Right ventricle myocardium superior (tissue), 1 donor: ENCODE measurements at regions of chr1 and their contacts with region 1.

Region 1: DNA sequence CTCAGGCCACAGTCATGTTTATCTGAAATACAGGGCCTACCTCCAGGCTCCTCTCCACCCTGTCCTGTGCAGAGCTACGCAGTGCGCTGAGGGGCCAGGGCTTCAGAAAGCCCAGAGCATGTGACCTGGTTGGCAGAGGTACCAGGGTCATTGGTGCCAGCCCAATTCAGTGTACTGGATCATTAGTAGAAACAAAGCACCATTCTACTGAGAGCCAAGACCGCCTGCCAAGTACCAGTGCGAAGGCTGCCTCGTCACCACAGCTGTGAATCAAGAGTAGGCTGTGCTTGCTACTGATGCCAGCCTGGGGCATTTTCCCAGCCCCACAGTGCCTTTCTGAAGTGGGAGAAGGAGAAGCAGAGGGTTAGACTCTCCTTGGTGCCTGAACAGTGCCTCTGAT is 59.8 kb downstream of the CAPN9 start:
- DNase-seq: peak; percentile 86
- ATAC-seq: peak; percentile 97

Region 2: DNA sequence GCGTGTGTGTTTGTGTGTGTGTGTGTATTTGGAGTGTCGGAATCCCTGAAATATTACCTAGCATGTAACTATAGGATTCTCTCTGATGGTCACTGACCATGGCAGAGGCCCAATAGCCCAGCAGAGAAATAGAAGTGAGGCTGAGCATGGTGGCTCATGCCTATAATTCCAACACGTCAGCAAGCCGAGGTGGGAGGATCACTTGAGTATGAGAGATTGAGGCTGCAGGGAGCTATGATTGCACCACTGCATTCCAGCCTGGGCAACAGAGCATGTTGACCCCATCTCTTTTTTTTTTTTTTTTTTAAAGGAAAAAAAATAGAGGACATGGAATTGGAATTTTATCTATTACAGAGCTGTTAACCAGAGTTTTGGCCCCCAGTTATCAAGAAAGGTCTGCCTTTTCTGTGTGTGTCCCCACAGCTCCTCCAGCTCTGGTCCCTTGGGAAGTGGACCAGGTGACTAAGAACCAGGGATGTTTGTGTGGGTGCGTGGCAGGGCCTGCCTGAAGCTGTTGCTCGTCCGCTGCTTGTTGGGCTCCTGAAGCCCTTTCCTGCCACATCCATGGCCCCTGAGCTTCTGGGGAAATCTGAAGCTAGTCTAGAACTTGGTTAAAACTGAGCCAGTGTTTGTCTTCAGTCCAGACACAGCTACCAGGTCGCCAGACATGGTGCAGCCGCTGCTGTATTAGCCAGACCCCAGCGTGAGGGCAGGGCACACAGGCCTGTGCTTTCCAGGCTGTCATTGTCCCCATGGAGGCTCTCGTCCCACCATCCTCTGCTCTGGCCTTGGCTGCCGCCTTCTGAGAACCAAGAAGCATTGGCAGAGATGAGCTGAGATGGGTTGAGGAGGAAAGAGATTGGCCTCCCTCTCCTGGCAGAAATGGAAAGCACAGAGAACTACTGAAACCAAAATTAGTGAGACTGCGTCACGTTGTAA is 34.3 kb before region 1 on chr1:
- intact Hi-C with region 1: no loop called
- DNase-seq: peak; percentile 66
- ATAC-seq: peak; percentile 92

Region 3: GRCh38 chr1:230867903-230868735 is 61.1 kb after region 1 on chr1 and contains the start of gene C1orf198:
- intact Hi-C with region 1: loop called (anchors 2 kb)
- DNase-seq: peak; percentile 81
- ATAC-seq: peak; percentile 93
- total RNA-seq, gene C1orf198: 43.1 TPM